ENCODE measurements at regions of chr6 and their contacts with region 1.

Region 1: GRCh38 chr6:145929037-145929633 is 35.0 kb downstream of the SHPRH start:
- DNase-seq: no peak
- H3K4me3 Mint-ChIP-seq: no peak overlapping the region
- H3K27ac Mint-ChIP-seq: no peak overlapping the region
- H3K4me1 Mint-ChIP-seq: no peaks in the 10 kb centered on the region
- H3K27me3 Mint-ChIP-seq: no peaks in the 10 kb centered on the region

Region 2: GRCh38 chr6:146700078-146700686 is 771.0 kb after region 1 on chr6:
- intact Hi-C with region 1: loop called (anchors 1 kb)
- DNase-seq: no peak
- H3K4me3 Mint-ChIP-seq: no peak overlapping the region
- H3K27ac Mint-ChIP-seq: no peak overlapping the region
- H3K4me1 Mint-ChIP-seq: no peaks in the 10 kb centered on the region
- H3K27me3 Mint-ChIP-seq: peaks cover 9% of the 10 kb centered on the region

Region 3: GRCh38 chr6:146785001-146785585 is 856.0 kb after region 1 on chr6:
- intact Hi-C with region 1: loop called (anchors 10 kb)
- DNase-seq: peak; percentile 8
- H3K4me3 Mint-ChIP-seq: no peak overlapping the region
- H3K27ac Mint-ChIP-seq: no peak overlapping the region
- H3K4me1 Mint-ChIP-seq: peaks cover 11% of the 10 kb centered on the region
- H3K27me3 Mint-ChIP-seq: peaks cover 13% of the 10 kb centered on the region